ENCODE measurements at regions of chr7 and their contacts with region 1.

Region 1: DNA sequence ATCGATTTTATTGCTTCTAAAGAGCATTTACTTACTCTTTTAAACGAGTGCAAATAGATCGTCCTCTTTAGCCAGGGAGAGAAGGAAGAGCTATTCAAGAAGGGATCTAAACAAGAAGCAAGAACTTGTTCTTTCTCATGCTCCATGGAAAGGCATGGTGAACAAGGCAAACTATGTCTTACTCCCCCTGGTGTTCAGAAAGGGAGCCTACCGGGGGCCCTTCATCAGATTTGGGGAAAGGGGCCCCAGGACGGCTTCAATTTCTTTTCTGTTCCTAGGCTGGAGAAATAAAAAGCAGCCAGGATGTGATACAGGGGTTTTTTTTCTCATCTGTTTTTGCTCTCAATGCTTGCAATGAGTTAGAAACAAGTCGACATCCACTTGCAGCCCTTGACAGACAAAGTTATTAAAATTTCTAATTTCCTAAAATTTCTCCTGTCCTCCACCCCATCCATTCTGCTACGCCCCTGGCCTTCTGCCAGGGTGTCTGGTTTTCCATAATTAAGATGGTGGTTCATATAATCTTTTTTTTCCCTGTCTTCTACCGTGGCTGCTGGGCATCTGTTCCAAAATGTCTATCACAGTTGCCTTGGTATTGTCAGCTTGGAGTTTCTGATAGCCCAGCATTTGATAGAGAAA is 214.4 kb downstream of the CREB5 start:
- DNase-seq: no peak
- H3K4me3 ChIP-seq: no peak overlapping the region
- H3K27ac ChIP-seq: peak overlapping the region; percentile 24 to 28
- H3K4me1 ChIP-seq: peaks cover 9 to 37% of the 10 kb centered on the region in 2 donors
- H3K27me3 ChIP-seq: no peaks in the 10 kb centered on the region
- CTCF ChIP-seq: peak; percentile 21 to 56 (median 36)

Region 2: GRCh38 chr7:28245123-28245878 is 381.4 kb before region 1 on chr7:
- intact Hi-C with region 1: no loop called
- DNase-seq: no peak
- H3K4me3 ChIP-seq: no peak overlapping the region
- H3K27ac ChIP-seq: no peak overlapping the region
- H3K4me1 ChIP-seq: no peaks in the 10 kb centered on the region
- H3K27me3 ChIP-seq: no peaks in the 10 kb centered on the region
- CTCF ChIP-seq: no peak

Region 3: GRCh38 chr7:28389504-28390395 is 237.0 kb before region 1 on chr7:
- intact Hi-C with region 1: loop called (anchors 5 kb)
- DNase-seq: no peak
- H3K4me3 ChIP-seq: peak overlapping the region; percentile 18 to 37
- H3K27ac ChIP-seq: no peak overlapping the region
- H3K4me1 ChIP-seq: no peaks in the 10 kb centered on the region
- H3K27me3 ChIP-seq: no peaks in the 10 kb centered on the region
- CTCF ChIP-seq: peak; percentile 59 to 82 (median 81)

Region 4: DNA sequence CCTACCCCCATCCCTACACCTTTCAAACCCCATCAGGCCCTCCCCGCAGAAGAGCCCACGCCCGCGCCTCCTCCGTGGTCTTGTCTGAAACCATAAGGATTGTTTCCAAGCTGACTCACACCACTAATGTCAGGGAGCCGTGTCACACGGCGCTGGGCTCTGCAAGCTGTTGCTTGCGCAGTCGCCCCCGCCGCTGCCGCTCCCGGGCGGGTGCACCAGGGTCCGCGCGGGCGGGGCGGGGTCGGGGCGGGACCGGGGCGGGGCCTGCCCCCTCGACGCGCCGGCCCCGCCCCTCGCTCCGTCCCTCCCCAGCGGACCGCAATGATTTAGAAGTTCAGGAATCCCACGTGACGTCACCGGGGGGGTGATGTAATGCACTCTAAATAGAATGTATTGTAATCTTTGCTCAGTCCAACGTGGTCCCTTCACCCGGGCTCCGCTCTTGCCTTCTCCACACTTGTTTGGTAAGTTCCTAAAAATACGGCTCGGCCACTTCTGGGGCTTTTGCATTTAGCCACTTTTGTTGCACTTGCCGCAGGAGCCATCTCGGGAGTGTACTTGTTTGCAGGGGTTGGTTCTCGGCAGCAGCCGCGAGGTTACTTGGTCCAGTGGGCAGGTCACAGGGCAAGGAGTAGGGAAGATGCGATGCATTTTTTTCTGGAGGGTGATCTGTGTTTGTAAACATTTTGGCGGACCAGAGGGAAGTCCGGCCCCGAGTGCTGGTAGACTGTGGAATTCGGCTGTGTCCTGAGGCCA is 217.6 kb before region 1 on chr7:
- intact Hi-C with region 1: loop called (anchors 5 kb)
- DNase-seq: peak; percentile 91 to 99
- H3K4me3 ChIP-seq: peak overlapping the region; percentile 59 to 86
- H3K27ac ChIP-seq: peak overlapping the region; percentile 89 to 91
- H3K4me1 ChIP-seq: peaks cover 6 to 27% of the 10 kb centered on the region in 2 donors
- H3K27me3 ChIP-seq: no peaks in the 10 kb centered on the region
- CTCF ChIP-seq: no peak

Region 5: GRCh38 chr7:28647081-28647421 is 20.3 kb after region 1 on chr7:
- intact Hi-C with region 1: no loop called
- DNase-seq: no peak
- H3K4me3 ChIP-seq: no peak overlapping the region
- H3K27ac ChIP-seq: no peak overlapping the region
- H3K4me1 ChIP-seq: no peaks in the 10 kb centered on the region
- H3K27me3 ChIP-seq: no peaks in the 10 kb centered on the region
- CTCF ChIP-seq: no peak